ENCODE measurements at regions of chr5 and their contacts with region 1.

Region 1: DNA sequence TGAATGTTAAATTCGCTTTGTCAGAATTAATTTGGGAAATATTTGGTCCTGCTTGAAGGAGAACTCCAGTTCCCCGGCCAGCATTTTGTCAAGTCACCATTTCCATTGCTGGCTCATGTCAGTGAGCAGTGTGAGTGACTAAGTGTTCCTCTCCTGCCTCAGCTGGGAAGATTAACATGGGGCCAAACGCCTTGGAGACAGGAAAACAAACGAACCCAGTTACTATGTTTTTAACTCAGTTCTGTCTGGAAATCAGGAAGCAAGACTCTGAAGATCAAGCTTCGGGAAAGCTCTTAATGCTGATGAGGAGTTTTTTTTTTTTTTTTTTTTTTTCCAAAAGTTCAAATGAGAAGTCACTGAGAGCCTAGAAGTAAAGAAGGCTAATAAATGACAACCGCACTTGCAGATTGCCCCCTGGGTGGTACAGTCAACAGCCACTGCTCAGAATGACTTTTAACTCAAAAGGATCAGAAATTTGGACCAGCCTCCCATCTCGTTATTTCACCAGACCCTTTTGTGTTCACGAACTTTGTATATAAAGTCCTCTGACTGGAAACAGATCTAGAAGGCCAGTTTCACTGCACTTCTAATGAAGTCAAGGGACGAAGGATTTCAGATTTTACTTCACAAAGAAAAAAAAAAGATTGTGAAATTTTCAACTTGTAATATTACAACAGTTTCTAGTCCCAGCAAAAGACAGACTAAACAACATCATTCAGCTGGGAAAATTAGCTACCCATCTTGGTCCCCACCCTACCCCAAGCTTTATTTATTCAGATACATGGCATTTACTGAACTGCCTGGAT is 121.3 kb downstream of the LHFPL2 start:
- DNase-seq: peak in 4 of 5 donors; percentile 79 to 82 (median 80)
- ATAC-seq: peak; percentile 89 to 94 (median 91)
- H3K4me3 ChIP-seq: peak overlapping the region in 1 of 12 donors; percentile 20
- H3K27ac ChIP-seq: peak overlapping the region in 11 of 12 donors; percentile 2 to 82 (median 58)
- H3K4me1 ChIP-seq: peaks cover 0 to 79% (median 32%) of the 10 kb centered on the region in 12 donors
- H3K27me3 ChIP-seq: no peaks in the 10 kb centered on the region
- CTCF ChIP-seq: no peak
- POLR2A ChIP-seq: no peak

Region 2: GRCh38 chr5:78157001-78157400 is 370.3 kb before region 1 on chr5:
- intact Hi-C with region 1: no loop called
- DNase-seq: peak in 1 of 5 donors; percentile 14
- ATAC-seq: no peak
- H3K4me3 ChIP-seq: no peak overlapping the region
- H3K27ac ChIP-seq: no peak overlapping the region
- H3K4me1 ChIP-seq: no peaks in the 10 kb centered on the region
- H3K27me3 ChIP-seq: no peaks in the 10 kb centered on the region
- CTCF ChIP-seq: no peak
- POLR2A ChIP-seq: no peak

Region 3: GRCh38 chr5:78476795-78477194 is 50.5 kb before region 1 on chr5:
- intact Hi-C with region 1: loop called in 3 of 10 experiments (anchors 5 kb)
- DNase-seq: no peak
- ATAC-seq: no peak
- H3K4me3 ChIP-seq: no peak overlapping the region
- H3K27ac ChIP-seq: no peak overlapping the region
- H3K4me1 ChIP-seq: no peaks in the 10 kb centered on the region
- H3K27me3 ChIP-seq: no peaks in the 10 kb centered on the region
- CTCF ChIP-seq: no peak
- POLR2A ChIP-seq: no peak